Activated CD8-positive, alpha-beta T cell treated with anti-CD3 and anti-CD28 coated beads for 36 hours (primary cell): ENCODE measurements at regions of chr11 and their contacts with region 1.

Region 1: DNA sequence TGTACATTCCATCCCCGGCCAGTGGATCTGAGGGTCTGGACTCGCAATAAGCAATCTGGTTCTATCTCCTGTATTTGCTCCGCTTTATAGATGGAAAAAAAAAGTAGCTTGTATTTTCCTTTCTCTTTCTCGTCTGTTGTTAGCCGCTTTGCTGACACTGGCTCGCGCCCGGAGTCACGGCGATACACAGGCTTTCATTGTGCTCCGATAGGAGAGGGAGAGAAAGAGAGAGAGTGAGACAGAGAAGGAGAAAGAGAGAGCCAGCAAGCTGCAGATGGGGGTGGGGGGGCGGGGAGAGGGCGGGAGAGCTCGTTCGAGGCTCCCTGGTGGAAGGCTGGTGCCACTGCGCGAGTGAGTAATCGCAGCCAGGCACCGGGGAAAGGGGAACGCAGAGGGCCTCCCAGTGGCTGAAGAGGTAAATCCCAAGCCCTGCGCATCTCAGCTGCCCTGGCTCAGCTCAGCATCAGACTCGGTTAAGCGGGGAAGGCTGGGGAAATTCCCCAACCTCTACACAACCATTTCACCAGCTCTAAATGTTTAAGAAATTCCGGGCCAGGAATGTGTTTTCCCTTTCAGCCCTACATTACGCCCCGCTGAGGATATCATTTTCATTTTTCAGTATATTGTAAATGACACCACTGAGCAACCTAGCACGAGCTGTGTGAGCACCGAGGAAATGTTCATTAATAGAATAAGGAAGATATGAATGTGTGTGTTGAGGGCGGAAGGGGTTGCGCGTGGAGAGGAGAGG is at the start of gene MAML2:
- DNase-seq: peak; percentile 96
- ATAC-seq: peak; percentile 84
- H3K4me3 Mint-ChIP-seq: peak within 1 kb of the TSS; percentile 86
- H3K27ac Mint-ChIP-seq: peak within 1 kb of the TSS; percentile 94
- H3K4me1 Mint-ChIP-seq: peaks cover 23% of the 10 kb centered on the region
- H3K27me3 Mint-ChIP-seq: no peaks in the 10 kb centered on the region
- CTCF ChIP-seq: peak; percentile 85
- total RNA-seq, gene MAML2: 11.8 to 12.5 TPM

Region 2: GRCh38 chr11:95849087-95849825 is 493.9 kb before region 1 on chr11:
- CTCF ChIA-PET with region 1: interaction called, 11 read pairs
- POLR2A ChIA-PET with region 1: no interaction called
- intact Hi-C with region 1: no loop called
- DNase-seq: peak; percentile 44
- ATAC-seq: peak; percentile 66
- H3K4me3 Mint-ChIP-seq: no peak overlapping the region
- H3K27ac Mint-ChIP-seq: no peak overlapping the region
- H3K4me1 Mint-ChIP-seq: peaks cover 11% of the 10 kb centered on the region
- H3K27me3 Mint-ChIP-seq: no peaks in the 10 kb centered on the region
- CTCF ChIP-seq: peak; percentile 49

Region 3: DNA sequence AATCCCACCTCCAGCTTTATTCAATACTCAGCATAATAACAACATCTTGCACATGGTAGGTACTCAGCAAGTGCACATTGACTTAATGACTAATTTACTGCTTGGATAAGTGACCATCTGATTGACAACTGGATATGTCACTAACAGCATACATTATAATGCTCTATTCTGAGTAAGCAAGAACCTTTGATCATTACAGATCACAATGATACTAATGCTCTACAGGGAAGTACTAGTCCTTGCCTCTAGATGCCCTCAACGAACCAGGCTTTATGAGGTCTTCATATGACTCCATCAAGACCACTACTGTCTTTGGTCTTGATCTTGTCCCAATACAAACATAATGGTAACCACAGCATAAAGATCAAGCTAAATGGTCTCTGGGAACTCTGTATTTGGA is 251.7 kb before region 1 on chr11:
- CTCF ChIA-PET with region 1: interaction called, 12 read pairs
- POLR2A ChIA-PET with region 1: no interaction called
- intact Hi-C with region 1: no loop called
- DNase-seq: peak; percentile 33
- ATAC-seq: peak; percentile 96
- H3K4me3 Mint-ChIP-seq: no peak overlapping the region
- H3K27ac Mint-ChIP-seq: no peak overlapping the region
- H3K4me1 Mint-ChIP-seq: peaks cover 73% of the 10 kb centered on the region
- H3K27me3 Mint-ChIP-seq: no peaks in the 10 kb centered on the region
- CTCF ChIP-seq: peak; percentile 14

Region 4: GRCh38 chr11:96215110-96215782 is 127.9 kb before region 1 on chr11:
- CTCF ChIA-PET with region 1: interaction called, 14 read pairs
- POLR2A ChIA-PET with region 1: interaction called, 7 read pairs
- intact Hi-C with region 1: loop called (anchors 5 kb)
- DNase-seq: peak; percentile 61
- ATAC-seq: peak; percentile 64
- H3K4me3 Mint-ChIP-seq: peak overlapping the region; percentile 60
- H3K27ac Mint-ChIP-seq: peak overlapping the region; percentile 97
- H3K4me1 Mint-ChIP-seq: peaks cover 84% of the 10 kb centered on the region
- H3K27me3 Mint-ChIP-seq: no peaks in the 10 kb centered on the region
- CTCF ChIP-seq: no peak

Region 5: DNA sequence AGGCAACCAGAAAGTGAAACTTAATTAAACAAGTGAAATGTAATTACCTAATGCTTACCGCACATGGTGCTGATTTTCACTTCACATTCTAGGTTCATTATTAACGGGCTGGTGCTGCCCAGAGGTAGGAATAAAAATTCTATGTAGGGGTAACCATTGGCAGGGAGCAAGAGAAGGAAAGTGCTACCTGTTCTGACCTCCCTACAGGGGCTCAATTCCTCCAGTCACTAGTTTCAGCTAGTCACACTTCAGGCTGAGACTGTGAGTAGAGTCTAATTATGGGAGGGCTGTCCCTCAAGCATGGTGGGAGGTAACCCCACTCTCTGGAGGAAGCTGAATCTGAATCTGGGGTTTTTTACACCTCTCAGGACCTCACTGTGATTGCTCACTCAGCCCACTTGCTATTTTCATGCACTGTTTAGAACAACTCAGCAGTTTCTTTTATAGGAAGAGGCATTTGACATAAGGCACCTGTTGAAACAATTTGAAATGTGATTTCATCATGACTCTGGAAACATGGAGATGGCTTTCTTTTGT is 75.6 kb before region 1 on chr11:
- CTCF ChIA-PET with region 1: interaction called, 11 read pairs
- POLR2A ChIA-PET with region 1: interaction called, 4 read pairs
- intact Hi-C with region 1: no loop called
- DNase-seq: peak; percentile 79
- ATAC-seq: peak; percentile 98
- H3K4me3 Mint-ChIP-seq: peak overlapping the region; percentile 58
- H3K27ac Mint-ChIP-seq: peak overlapping the region; percentile 90
- H3K4me1 Mint-ChIP-seq: peaks cover 89% of the 10 kb centered on the region
- H3K27me3 Mint-ChIP-seq: no peaks in the 10 kb centered on the region
- CTCF ChIP-seq: no peak

Region 6: DNA sequence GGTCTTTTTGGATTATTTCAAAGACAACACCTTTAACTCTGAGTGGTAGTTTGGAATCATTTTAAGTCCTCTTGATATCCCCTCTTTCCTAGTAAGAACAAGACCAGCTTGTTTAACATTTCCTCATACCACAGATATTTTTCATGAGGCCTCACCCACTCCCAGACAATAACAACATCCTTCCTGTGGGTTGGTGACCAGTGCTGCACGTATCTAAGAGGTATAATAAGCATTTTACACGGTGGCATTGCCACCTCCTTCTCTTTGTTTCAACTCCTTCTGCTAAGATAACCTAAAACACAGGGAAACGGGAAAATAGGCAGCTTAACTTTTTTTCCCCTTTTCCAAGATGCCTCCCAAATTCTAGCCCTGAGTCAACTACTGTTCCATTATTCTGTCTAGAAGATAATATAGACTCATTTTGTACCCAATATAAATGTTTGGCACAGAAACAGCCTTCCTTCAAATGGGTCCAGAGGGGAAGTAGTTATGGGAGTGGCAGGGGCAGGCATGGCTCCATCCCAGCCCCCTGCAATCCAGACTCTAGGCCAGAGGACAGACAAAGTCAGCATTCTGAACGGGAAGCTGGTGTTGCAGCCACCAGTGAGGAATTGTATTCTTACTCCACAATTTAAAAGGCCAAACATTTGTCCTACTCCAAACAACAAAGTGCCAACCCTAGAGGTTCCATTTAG is 28.7 kb before region 1 on chr11:
- CTCF ChIA-PET with region 1: interaction called, 43 read pairs
- POLR2A ChIA-PET with region 1: interaction called, 9 read pairs
- intact Hi-C with region 1: no loop called
- DNase-seq: peak; percentile 31
- ATAC-seq: peak; percentile 46
- H3K4me3 Mint-ChIP-seq: no peak overlapping the region
- H3K27ac Mint-ChIP-seq: peak overlapping the region; percentile 77
- H3K4me1 Mint-ChIP-seq: peaks cover 89% of the 10 kb centered on the region
- H3K27me3 Mint-ChIP-seq: no peaks in the 10 kb centered on the region
- CTCF ChIP-seq: no peak

Region 7: GRCh38 chr11:96412761-96413381 is 69.7 kb after region 1 on chr11:
- CTCF ChIA-PET with region 1: no interaction called
- POLR2A ChIA-PET with region 1: no interaction called
- intact Hi-C with region 1: no loop called
- DNase-seq: no peak
- ATAC-seq: no peak
- H3K4me3 Mint-ChIP-seq: no peak overlapping the region
- H3K27ac Mint-ChIP-seq: no peak overlapping the region
- H3K4me1 Mint-ChIP-seq: peaks cover 6% of the 10 kb centered on the region
- H3K27me3 Mint-ChIP-seq: peaks cover 17% of the 10 kb centered on the region
- CTCF ChIP-seq: no peak

Region 8: GRCh38 chr11:96459751-96460150 is 116.6 kb after region 1 on chr11:
- CTCF ChIA-PET with region 1: no interaction called
- POLR2A ChIA-PET with region 1: no interaction called
- intact Hi-C with region 1: no loop called
- DNase-seq: no peak
- ATAC-seq: no peak
- H3K4me3 Mint-ChIP-seq: no peak overlapping the region
- H3K27ac Mint-ChIP-seq: no peak overlapping the region
- H3K4me1 Mint-ChIP-seq: no peaks in the 10 kb centered on the region
- H3K27me3 Mint-ChIP-seq: peaks cover 12% of the 10 kb centered on the region
- CTCF ChIP-seq: no peak

Region 9: GRCh38 chr11:96469776-96470175 is 126.6 kb after region 1 on chr11:
- CTCF ChIA-PET with region 1: no interaction called
- POLR2A ChIA-PET with region 1: no interaction called
- intact Hi-C with region 1: no loop called
- DNase-seq: no peak
- ATAC-seq: no peak
- H3K4me3 Mint-ChIP-seq: no peak overlapping the region
- H3K27ac Mint-ChIP-seq: no peak overlapping the region
- H3K4me1 Mint-ChIP-seq: peaks cover 2% of the 10 kb centered on the region
- H3K27me3 Mint-ChIP-seq: peaks cover 1% of the 10 kb centered on the region
- CTCF ChIP-seq: no peak